ENCODE measurements at regions of chr10 and their contacts with region 1.

Region 1: GRCh38 chr10:26725837-26726727 is 28.6 kb downstream of the PDSS1 start:
- DNase-seq: peak in 1 of 2 experiments; percentile 5
- H3K4me3 ChIP-seq: no peak overlapping the region
- H3K27ac ChIP-seq: no peak overlapping the region
- H3K4me1 ChIP-seq: no peaks in the 10 kb centered on the region
- H3K27me3 ChIP-seq: no peaks in the 10 kb centered on the region
- CTCF ChIP-seq: peak; percentile 38 to 69 (median 60)
- EP300 ChIP-seq: no peak
- POLR2A ChIP-seq: no peak
- RAD21 ChIP-seq: peak; percentile 79 to 81

Region 2: DNA sequence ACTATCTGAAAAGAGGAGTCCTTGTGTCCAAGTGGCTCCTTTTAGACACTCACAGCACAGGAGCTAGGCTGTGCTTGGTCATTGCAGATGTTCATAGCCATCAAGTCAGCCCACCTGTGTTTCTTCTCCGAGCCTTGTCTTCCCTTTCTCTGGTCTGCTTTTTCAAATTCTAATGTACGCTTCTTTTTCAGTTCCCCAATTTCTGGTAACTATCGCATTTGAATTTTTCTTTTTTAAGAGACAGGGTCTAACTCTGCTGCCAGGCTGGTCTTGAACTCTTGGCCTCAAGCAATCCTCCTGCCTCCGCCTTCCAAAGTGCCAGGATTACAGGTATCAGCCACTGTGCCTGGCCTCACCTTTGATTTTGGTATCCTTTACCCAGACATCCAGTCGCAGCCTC is 269.0 kb before region 1 on chr10:
- CTCF ChIA-PET with region 1: no interaction called
- POLR2A ChIA-PET with region 1: no interaction called
- DNase-seq: no peak
- H3K4me3 ChIP-seq: no peak overlapping the region
- H3K27ac ChIP-seq: no peak overlapping the region
- H3K4me1 ChIP-seq: no peaks in the 10 kb centered on the region
- H3K27me3 ChIP-seq: no peaks in the 10 kb centered on the region
- CTCF ChIP-seq: no peak
- EP300 ChIP-seq: no peak
- POLR2A ChIP-seq: no peak
- RAD21 ChIP-seq: no peak

Region 3: GRCh38 chr10:26706206-26706605 is 19.9 kb before region 1 on chr10:
- CTCF ChIA-PET with region 1: interaction called, 16 read pairs
- POLR2A ChIA-PET with region 1: no interaction called
- DNase-seq: no peak
- H3K4me3 ChIP-seq: no peak overlapping the region
- H3K27ac ChIP-seq: no peak overlapping the region
- H3K4me1 ChIP-seq: no peaks in the 10 kb centered on the region
- H3K27me3 ChIP-seq: no peaks in the 10 kb centered on the region
- CTCF ChIP-seq: no peak
- EP300 ChIP-seq: no peak
- POLR2A ChIP-seq: no peak
- RAD21 ChIP-seq: no peak

Region 4: GRCh38 chr10:26741368-26741767 is 15.3 kb after region 1 on chr10:
- CTCF ChIA-PET with region 1: interaction called, 25 read pairs
- POLR2A ChIA-PET with region 1: interaction called, 3 read pairs
- DNase-seq: no peak
- H3K4me3 ChIP-seq: no peak overlapping the region
- H3K27ac ChIP-seq: no peak overlapping the region
- H3K4me1 ChIP-seq: peaks cover 0 to 2% (median 0%) of the 10 kb centered on the region in 4 experiments; a peak in 1 of 7 replicates
- H3K27me3 ChIP-seq: no peaks in the 10 kb centered on the region
- CTCF ChIP-seq: no peak
- EP300 ChIP-seq: no peak
- POLR2A ChIP-seq: no peak
- RAD21 ChIP-seq: no peak

Region 5: GRCh38 chr10:26860443-26861204 is 134.5 kb after region 1 on chr10 and contains the start of gene ABI1:
- CTCF ChIA-PET with region 1: interaction called, 16 read pairs
- POLR2A ChIA-PET with region 1: no interaction called
- DNase-seq: peak; percentile 95 to 97
- H3K4me3 ChIP-seq: peak within 1 kb of the TSS; percentile 94 to 99 (median 94)
- H3K27ac ChIP-seq: peak within 1 kb of the TSS; percentile 87
- H3K4me1 ChIP-seq: peaks cover 0 to 2% (median 0%) of the 10 kb centered on the region in 4 experiments; a peak in 4 of 7 replicates
- H3K27me3 ChIP-seq: no peaks in the 10 kb centered on the region
- CTCF ChIP-seq: no peak
- EP300 ChIP-seq: no peak
- POLR2A ChIP-seq: peak; percentile 90 to 95
- RAD21 ChIP-seq: no peak
- total RNA-seq, gene ABI1: 35.6 and 37.0 TPM in 2 replicates

Region 6: GRCh38 chr10:26881600-26882331 is 155.7 kb after region 1 on chr10:
- CTCF ChIA-PET with region 1: interaction called, 147 read pairs
- POLR2A ChIA-PET with region 1: interaction called, 4 read pairs
- DNase-seq: no peak
- H3K4me3 ChIP-seq: no peak overlapping the region
- H3K27ac ChIP-seq: no peak overlapping the region
- H3K4me1 ChIP-seq: no peaks in the 10 kb centered on the region
- H3K27me3 ChIP-seq: no peaks in the 10 kb centered on the region; a peak in 1 of 7 replicates
- CTCF ChIP-seq: peak in 2 of 3 experiments; percentile 69 to 77; a peak in 3 of 4 replicates
- EP300 ChIP-seq: no peak
- POLR2A ChIP-seq: no peak
- RAD21 ChIP-seq: peak; percentile 86 to 90